ENCODE measurements at regions of chr3 and their contacts with region 1.

Region 1: DNA sequence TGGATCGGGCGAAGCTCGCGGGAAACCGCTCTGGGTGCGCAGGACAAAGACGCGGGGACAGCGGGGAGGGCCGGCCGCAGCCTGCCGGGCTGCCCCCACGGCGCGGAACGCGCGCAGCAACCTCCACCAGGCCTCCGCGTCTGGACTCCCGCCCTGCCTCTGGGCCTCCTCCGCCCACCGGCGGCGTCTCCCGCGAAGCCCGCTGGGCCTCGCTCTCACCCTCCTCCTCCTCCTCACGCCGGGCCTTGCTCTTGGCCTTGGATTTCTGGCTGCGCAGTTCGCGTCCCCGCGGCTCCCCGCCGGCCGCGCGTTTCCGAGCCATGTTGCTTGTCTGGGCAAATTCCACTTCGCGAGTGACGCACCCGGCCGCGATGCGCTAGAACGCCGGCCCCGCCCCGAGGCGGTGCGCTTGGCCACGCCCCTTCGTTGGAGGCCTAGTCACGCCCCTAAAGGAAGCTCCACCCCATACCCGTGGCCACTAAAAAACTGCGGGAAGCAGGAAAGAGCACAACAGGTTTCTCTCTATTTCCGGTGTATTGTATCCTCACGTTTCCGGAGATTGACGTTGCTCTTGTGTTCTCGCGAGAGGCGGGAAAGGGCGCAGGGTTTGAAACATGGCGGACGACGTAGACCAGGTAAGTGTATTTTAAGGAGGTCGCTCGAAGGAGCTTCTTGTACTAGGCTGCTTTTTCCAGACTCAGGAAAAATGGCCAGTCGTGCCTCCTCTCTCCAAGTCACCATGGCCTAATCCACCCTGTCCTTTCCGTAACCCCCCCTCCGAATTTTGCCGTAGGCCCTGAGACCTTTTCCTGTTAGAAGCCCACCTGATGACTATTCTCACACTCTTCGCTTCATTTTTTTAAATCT is at the starts of genes LSM3 and XPC:
- DNase-seq: peak; percentile 98
- ATAC-seq: peak; percentile 93
- H3K4me3 Mint-ChIP-seq: peak within 1 kb of the TSS; percentile 79
- H3K27ac Mint-ChIP-seq: peak within 1 kb of the TSS; percentile 94
- H3K4me1 Mint-ChIP-seq: peaks cover 64% of the 10 kb centered on the region
- H3K27me3 Mint-ChIP-seq: no peaks in the 10 kb centered on the region
- total RNA-seq, gene LSM3: 23.0 to 30.2 TPM
- total RNA-seq, gene XPC: 24.3 to 24.7 TPM

Region 2: GRCh38 chr3:12193485-12194165 is 1984.9 kb before region 1 on chr3:
- CTCF ChIA-PET with region 1: no interaction called
- POLR2A ChIA-PET with region 1: no interaction called
- intact Hi-C with region 1: loop called in 1 of 2 experiments (anchors 5 kb)
- DNase-seq: peak; percentile 63
- ATAC-seq: peak; percentile 60
- H3K4me3 Mint-ChIP-seq: peak overlapping the region; percentile 32
- H3K27ac Mint-ChIP-seq: peak overlapping the region; percentile 87
- H3K4me1 Mint-ChIP-seq: peaks cover 62% of the 10 kb centered on the region
- H3K27me3 Mint-ChIP-seq: peaks cover 4% of the 10 kb centered on the region

Region 3: GRCh38 chr3:13479581-13480339 is 698.7 kb before region 1 on chr3 and contains the start of gene HDAC11:
- CTCF ChIA-PET with region 1: no interaction called
- POLR2A ChIA-PET with region 1: no interaction called
- intact Hi-C with region 1: loop called in 1 of 2 experiments (anchors 2 kb)
- DNase-seq: peak; percentile 99
- ATAC-seq: peak; percentile 96
- H3K4me3 Mint-ChIP-seq: peak within 1 kb of the TSS; percentile 89
- H3K27ac Mint-ChIP-seq: peak within 1 kb of the TSS; percentile 90
- H3K4me1 Mint-ChIP-seq: peaks cover 20% of the 10 kb centered on the region
- H3K27me3 Mint-ChIP-seq: no peaks in the 10 kb centered on the region
- total RNA-seq, gene HDAC11: 3.4 to 4.1 TPM

Region 4: GRCh38 chr3:14042680-14043079 is 135.8 kb before region 1 on chr3:
- CTCF ChIA-PET with region 1: no interaction called
- POLR2A ChIA-PET with region 1: no interaction called
- intact Hi-C with region 1: no loop called
- DNase-seq: no peak
- ATAC-seq: no peak
- H3K4me3 Mint-ChIP-seq: no peak overlapping the region
- H3K27ac Mint-ChIP-seq: no peak overlapping the region
- H3K4me1 Mint-ChIP-seq: no peaks in the 10 kb centered on the region
- H3K27me3 Mint-ChIP-seq: peaks cover 16% of the 10 kb centered on the region

Region 5: DNA sequence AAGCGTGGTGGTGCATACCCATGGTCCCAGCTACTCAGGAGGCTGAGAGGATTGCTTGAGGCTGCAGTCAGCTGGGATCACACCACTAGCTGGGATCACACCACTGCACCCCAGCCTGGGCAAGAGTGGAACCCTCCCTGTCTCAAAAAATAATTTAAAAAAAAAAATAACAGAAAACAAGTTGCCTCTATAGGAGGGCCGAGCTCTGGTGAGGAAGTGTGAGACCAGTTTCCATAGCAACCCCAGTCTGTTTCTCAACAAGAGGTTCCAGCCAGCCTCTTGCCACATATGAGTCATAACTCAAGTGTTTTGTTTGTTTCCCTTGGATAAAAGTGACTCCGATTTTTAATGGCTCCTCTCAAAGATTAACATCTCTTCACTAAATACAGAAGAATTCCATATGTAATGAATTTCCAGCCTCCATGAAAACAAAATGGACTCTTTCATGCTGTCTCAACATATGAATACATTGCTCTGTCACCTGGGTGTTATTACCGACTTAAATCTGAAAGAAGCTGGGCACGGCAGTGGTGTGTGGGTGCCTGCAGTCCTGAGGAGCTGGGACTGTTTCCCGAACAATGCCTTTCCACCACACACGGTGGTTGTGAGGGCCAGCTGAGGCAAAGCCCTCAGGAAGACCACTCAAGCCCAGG is 33.9 kb before region 1 on chr3:
- CTCF ChIA-PET with region 1: interaction called, 4 read pairs
- POLR2A ChIA-PET with region 1: interaction called, 7 read pairs
- intact Hi-C with region 1: loop called (anchors 1 kb)
- DNase-seq: peak; percentile 71
- ATAC-seq: peak; percentile 85
- H3K4me3 Mint-ChIP-seq: no peak overlapping the region
- H3K27ac Mint-ChIP-seq: peak overlapping the region; percentile 86
- H3K4me1 Mint-ChIP-seq: peaks cover 56% of the 10 kb centered on the region
- H3K27me3 Mint-ChIP-seq: no peaks in the 10 kb centered on the region

Region 6: GRCh38 chr3:14431892-14432834 is 253.7 kb after region 1 on chr3:
- CTCF ChIA-PET with region 1: no interaction called
- POLR2A ChIA-PET with region 1: no interaction called
- intact Hi-C with region 1: loop called in 1 of 2 experiments (anchors 1 kb)
- DNase-seq: peak; percentile 97
- ATAC-seq: peak; percentile 88
- H3K4me3 Mint-ChIP-seq: peak overlapping the region; percentile 63
- H3K27ac Mint-ChIP-seq: peak overlapping the region; percentile 96
- H3K4me1 Mint-ChIP-seq: peaks cover 86% of the 10 kb centered on the region
- H3K27me3 Mint-ChIP-seq: no peaks in the 10 kb centered on the region

Region 7: DNA sequence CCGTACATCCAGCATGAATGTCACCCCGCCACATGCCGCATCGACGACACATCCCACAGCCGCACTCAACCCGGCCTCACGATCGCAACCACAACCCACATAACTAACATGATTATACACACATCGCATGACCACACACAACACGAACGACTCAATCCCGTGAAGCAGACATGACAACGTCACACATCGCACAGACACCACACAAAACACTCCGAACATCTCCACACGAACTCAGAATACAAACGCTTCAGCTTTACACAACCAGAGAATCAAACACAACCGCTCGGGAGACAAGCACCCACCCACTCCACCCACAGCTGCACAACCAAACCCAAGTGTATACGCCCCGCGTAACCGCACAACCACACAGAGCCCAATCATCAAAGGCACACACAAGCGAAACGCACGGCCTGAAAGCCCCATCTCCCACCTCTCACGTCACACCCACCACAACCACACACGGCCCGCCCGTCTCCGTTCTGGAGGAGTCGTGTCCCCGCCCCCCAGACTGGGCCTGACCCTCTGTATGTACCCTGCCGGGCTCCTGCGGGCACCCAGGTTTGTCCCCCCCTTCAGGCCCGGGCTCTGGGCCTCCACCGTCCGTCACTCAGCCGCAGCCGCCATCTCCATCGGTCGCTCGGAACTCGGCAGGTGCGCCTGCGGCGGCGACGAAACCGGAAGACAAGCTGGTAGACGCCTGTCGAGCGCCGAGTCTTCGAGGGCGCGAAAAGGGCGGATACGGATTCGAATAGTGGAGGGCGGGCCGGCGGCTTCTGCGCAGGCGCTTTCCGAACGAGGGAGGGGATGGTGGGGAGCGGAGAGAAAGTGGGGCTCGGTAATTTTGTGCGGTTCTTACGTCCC is 920.3 kb after region 1 on chr3 and contains the start of gene RBSN:
- CTCF ChIA-PET with region 1: no interaction called
- POLR2A ChIA-PET with region 1: no interaction called
- intact Hi-C with region 1: loop called in 1 of 2 experiments (anchors 2 kb)
- DNase-seq: peak; percentile 98
- ATAC-seq: peak; percentile 85
- H3K4me3 Mint-ChIP-seq: peak within 1 kb of the TSS; percentile 85
- H3K27ac Mint-ChIP-seq: peak within 1 kb of the TSS; percentile 91
- H3K4me1 Mint-ChIP-seq: peaks cover 18% of the 10 kb centered on the region
- H3K27me3 Mint-ChIP-seq: peaks cover 2% of the 10 kb centered on the region
- total RNA-seq, gene RBSN: 13.5 to 15.0 TPM